ENCODE measurements at regions of chr1 and their contacts with region 1.

Region 1: GRCh38 chr1:62295921-62296491 is 23.2 kb downstream of the KANK4 start:
- DNase-seq: peak in 4 of 10 donors; percentile 11 to 65 (median 56)
- H3K4me3 ChIP-seq: peak overlapping the region in 7 of 59 donors; percentile 5 to 31 (median 21)
- H3K27ac ChIP-seq: no peak overlapping the region
- H3K27me3 ChIP-seq: peaks cover 0 to 14% (median 0%) of the 10 kb centered on the region in 45 donors
- CTCF ChIP-seq: no peak

Region 2: DNA sequence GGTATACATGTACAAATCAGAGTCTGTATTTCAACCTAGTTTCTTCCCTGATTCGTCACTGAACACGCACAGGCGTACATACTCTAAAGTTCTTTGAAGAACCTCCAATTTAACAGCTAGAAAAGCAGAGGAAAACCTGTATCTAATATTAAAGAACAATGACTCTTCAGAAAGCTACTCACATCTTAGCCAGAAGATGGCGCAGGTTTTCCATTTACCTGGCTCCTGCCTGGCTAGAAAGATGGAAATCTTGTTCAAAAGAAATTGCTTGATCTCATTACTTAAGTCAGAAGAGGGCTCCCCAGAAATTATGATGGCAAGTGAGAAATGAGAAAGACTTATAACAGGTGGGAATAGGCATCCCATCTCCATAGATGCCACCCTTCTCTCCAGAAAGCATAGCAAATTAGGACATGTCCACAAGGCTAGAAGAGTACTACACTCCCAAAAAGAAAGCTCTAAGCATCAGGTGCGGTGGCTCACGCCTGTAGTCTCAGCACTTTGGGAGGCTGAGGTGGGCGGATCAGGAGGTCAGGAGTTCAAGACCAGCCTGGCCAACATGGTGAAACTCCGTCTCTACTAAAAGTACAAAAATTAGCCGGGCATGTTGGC is 120.3 kb before region 1 on chr1:
- intact Hi-C with region 1: loop called in 1 of 2 experiments (anchors 10 kb)
- DNase-seq: peak in 4 of 10 donors; percentile 15 to 52 (median 39)
- H3K4me3 ChIP-seq: no peak overlapping the region
- H3K27ac ChIP-seq: no peak overlapping the region
- H3K27me3 ChIP-seq: peaks cover 0 to 6% (median 0%) of the 10 kb centered on the region in 45 donors
- CTCF ChIP-seq: peak; percentile 64 to 96 (median 82)

Region 3: DNA sequence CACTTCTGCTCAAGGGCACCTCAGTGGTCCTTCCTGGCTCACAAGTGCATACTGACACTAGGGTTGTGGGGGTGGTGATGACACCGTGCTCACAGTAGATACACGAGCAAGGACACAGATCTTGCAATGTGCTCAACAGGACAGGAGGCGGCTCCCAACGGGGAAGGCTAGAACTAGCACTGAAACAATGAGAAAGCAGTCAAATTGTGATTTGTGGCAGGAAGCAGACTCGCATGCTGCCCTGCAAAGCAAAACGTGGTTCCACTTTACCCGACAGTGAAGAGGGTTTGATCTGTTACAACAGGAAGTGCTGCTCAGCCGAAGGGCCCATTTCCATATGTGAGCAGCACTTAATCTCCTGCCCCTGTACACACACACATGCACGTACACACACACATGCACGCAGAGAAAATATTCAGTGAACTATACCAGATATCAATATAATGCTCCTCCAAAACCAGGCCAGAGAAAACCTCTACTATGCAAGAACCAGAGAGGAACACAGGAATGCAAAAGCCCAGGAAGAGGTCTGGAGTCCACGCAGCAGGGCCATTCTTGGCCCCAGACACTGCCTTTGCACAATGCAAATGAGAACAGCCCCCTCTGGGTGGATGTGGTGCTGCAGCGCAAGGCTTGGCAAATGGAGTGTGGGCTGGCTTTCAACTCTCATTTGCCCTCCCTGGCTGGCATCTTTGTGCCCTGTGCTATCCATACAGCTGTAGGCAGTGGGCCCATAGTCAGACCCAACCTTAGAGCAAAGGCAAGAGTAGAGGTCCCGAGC is 23.9 kb before region 1 on chr1:
- intact Hi-C with region 1: no loop called
- DNase-seq: no peak
- H3K4me3 ChIP-seq: no peak overlapping the region
- H3K27ac ChIP-seq: no peak overlapping the region
- H3K27me3 ChIP-seq: no peaks in the 10 kb centered on the region
- CTCF ChIP-seq: no peak

Region 4: GRCh38 chr1:62391369-62391971 is 95.5 kb after region 1 on chr1:
- intact Hi-C with region 1: loop called (anchors 5 to 10 kb)
- DNase-seq: peak in 1 of 10 donors; percentile 18
- H3K4me3 ChIP-seq: no peak overlapping the region
- H3K27ac ChIP-seq: no peak overlapping the region
- H3K27me3 ChIP-seq: no peaks in the 10 kb centered on the region
- CTCF ChIP-seq: peak; percentile 19 to 66 (median 44)

Region 5: DNA sequence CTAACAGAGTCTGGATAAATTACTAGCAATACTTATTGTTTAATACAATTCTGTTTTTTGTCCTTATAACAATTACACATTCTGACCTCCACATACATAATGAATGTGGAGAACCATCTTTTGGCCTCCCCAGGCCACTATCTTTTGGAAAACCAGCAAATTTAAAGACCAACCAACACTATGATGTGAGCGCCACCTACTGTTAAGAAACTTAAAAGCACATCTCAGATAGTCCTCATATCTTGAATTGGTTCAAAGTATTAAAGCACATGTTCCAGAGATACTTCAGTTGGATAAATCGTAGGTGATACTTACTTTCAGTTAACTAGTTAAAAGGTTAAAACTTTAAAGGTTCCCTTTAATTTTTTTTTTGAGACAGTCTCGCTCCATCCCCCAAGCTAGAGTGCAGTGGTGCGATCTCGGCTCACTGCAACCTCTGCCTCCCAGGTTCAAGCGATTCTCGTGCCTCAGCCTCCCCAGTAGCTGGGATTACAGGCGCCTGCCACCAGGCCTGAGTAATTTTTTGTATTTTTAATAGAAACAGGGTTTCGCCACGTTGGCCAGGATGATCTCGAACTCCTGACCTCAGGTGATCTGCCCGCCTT is 111.5 kb after region 1 on chr1:
- intact Hi-C with region 1: no loop called
- DNase-seq: peak in 2 of 10 donors; percentile 14 to 21
- H3K4me3 ChIP-seq: no peak overlapping the region
- H3K27ac ChIP-seq: no peak overlapping the region
- H3K27me3 ChIP-seq: peaks cover 0 to 10% (median 0%) of the 10 kb centered on the region in 45 donors
- CTCF ChIP-seq: peak in 55 of 56 donors; percentile 65 to 98 (median 88)